Dorsolateral prefrontal cortex (tissue), 120 donors: ENCODE measurements at regions of chr16 and their contacts with region 1.

Region 1: GRCh38 chr16:23595951-23596720 is at the start of gene NDUFAB1:
- DNase-seq: peak; percentile 79 to 93 (median 90)
- H3K4me3 ChIP-seq: peak within 1 kb of the TSS; percentile 75 to 100 (median 96)
- H3K27ac ChIP-seq: peak within 1 kb of the TSS in 55 of 59 donors; percentile 1 to 92 (median 75)
- H3K27me3 ChIP-seq: no peaks in the 10 kb centered on the region
- CTCF ChIP-seq: peak; percentile 98 to 100 (median 100)
- total RNA-seq, gene NDUFAB1: 48.6 to 136 (median 98.9) TPM

Region 2: GRCh38 chr16:23518435-23518891 is 77.7 kb before region 1 on chr16:
- intact Hi-C with region 1: no loop called
- DNase-seq: no peak
- H3K4me3 ChIP-seq: no peak overlapping the region
- H3K27ac ChIP-seq: peak overlapping the region in 4 of 59 donors; percentile 8 to 47 (median 23)
- H3K27me3 ChIP-seq: no peaks in the 10 kb centered on the region
- CTCF ChIP-seq: no peak

Region 3: GRCh38 chr16:23640931-23641765 is 45.0 kb after region 1 on chr16 and contains the starts of genes DCTN5 and PALB2:
- intact Hi-C with region 1: loop called (anchors 1 to 5 kb)
- DNase-seq: peak; percentile 89 to 97 (median 95)
- H3K4me3 ChIP-seq: peak within 1 kb of the TSS; percentile 65 to 100 (median 94)
- H3K27ac ChIP-seq: peak within 1 kb of the TSS in 56 of 59 donors; percentile 12 to 86 (median 68)
- H3K27me3 ChIP-seq: no peaks in the 10 kb centered on the region
- CTCF ChIP-seq: peak in 46 of 56 donors; percentile 7 to 62 (median 35)
- total RNA-seq, gene DCTN5: 69.5 to 136 (median 106) TPM
- total RNA-seq, gene PALB2: 8.2 to 23.7 (median 12.9) TPM

Region 4: GRCh38 chr16:23941963-23942564 is 345.9 kb after region 1 on chr16:
- intact Hi-C with region 1: no loop called
- DNase-seq: peak in 4 of 10 donors; percentile 38 to 49 (median 45)
- H3K4me3 ChIP-seq: no peak overlapping the region
- H3K27ac ChIP-seq: peak overlapping the region in 4 of 59 donors; percentile 1 to 28 (median 7)
- H3K27me3 ChIP-seq: no peaks in the 10 kb centered on the region
- CTCF ChIP-seq: no peak